Left cardiac atrium (tissue), 4 donors: ENCODE measurements at regions of chr7 and their contacts with region 1.

Region 1: DNA sequence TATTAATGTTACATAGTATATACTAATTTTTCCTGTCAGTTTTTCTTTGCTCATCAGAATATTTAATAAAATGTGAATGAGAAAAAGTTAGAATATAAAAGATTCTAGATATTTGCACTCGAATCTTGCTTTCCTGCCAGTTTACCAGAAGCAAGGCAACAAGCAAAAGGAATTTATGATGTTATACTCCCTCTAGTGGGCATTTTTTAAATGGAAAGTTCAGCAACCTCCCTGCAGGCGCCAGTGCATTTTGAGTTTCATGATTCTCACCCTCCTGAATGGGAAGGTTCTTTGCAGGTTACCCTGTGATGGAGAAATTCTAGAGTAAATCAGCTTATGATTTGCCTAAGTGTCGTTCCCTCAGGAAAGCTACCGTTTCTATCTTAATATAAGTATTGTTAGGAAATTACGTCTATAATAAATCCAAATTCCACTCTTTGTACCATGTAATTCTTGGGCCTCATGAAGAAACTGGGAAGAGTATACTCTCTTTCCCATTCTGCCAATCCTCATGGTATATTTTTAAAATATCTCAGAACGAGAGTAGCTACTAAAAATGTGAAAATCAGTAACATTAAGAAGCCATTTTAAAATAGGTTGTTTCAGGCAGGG is 350.0 kb downstream of the CRPPA start:
- DNase-seq: no peak
- ATAC-seq: peak; percentile 47 to 51

Region 2: DNA sequence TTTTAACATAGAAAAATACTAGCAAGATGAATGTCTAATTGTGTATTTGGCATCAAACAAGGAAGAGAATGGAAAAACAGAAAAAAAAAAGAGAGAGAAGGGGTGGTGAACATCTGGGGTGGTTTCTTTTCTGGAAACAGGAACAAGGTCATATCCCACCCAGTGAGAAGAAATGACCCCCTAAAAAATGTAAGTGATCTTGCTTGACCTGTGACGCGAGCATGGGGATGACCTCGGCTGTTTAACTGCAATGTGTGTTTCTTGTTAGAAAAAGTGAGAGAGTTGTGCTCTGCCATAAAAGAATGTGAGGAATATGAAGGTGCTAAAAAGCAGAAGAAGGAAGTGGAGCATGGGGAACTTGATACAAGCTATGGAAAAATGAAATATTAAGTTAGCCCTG is 768.0 kb before region 1 on chr7:
- intact Hi-C with region 1: loop called in 1 of 2 experiments (anchors 5 kb)
- DNase-seq: no peak
- ATAC-seq: no peak

Region 3: DNA sequence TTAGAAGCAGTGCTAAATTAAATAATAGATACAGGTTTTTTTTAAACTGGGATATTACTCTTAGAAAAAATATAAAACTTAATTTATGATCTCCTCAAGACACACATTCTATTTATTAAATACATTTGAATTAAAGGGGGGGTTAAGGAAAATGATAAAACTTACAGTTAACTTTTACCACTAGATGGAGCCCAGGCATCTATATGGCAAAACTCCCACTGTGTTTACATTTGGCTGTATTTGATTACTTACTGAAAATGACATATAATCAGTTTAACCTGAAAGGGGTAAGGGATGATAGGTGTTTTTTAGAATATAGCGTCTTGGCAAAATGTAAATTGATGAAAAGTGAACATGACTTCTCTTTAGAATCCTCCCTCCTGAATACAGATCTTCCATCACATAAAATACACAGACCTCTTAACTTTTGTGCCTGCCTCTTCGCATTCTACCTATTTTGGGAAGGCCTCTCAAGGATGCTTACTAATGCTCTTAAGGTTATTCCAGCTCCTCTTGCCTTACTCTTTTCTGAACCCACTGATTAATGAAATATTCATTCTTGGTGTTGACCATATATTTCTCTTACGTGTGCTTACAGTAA is 745.2 kb before region 1 on chr7:
- intact Hi-C with region 1: loop called (anchors 5 to 10 kb)
- DNase-seq: no peak
- ATAC-seq: no peak

Region 4: GRCh38 chr7:15561835-15562234 is 509.5 kb before region 1 on chr7 and contains the start of gene AGMO:
- intact Hi-C with region 1: loop called in 1 of 2 experiments (anchors 5 kb)
- DNase-seq: peak; percentile 48
- ATAC-seq: peak; percentile 80 to 85
- total RNA-seq, gene AGMO: 0.55 to 0.62 TPM

Region 5: GRCh38 chr7:15581352-15581951 is 489.9 kb before region 1 on chr7:
- intact Hi-C with region 1: no loop called
- DNase-seq: no peak
- ATAC-seq: no peak

Region 6: GRCh38 chr7:15889507-15889906 is 181.8 kb before region 1 on chr7:
- intact Hi-C with region 1: no loop called
- DNase-seq: peak; percentile 20
- ATAC-seq: peak; percentile 27 to 67

Region 7: DNA sequence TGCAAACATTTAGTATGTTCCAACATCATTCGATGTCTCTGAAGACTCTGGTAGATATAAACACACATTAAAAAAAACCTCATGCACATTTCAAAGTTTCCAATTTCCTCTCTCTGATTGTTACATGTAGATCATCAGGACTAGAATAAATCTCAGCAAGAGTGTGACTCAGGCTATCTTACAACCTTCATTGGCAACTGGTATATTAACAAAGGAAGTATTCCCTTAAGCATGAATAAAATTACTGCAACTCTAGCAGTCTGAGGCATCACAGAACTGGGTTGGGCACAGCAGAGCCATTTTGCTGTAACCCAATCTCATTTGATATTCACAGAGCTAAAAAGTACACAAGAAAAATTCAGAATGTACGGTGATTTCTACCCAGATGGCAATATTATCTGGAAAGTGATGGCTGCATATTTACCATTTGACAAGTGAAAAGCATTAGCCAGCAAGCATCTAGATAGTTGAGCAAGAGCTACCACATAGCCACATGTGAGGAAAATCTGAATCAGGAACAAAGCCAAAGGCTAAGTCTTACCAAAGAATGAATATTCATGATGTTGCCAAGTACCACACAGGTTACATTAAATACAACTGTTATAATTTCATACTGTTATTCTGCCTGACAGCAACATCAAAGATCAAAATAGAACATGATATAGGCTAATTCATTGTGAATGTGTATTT is 117.8 kb after region 1 on chr7:
- intact Hi-C with region 1: no loop called
- DNase-seq: no peak
- ATAC-seq: no peak

Region 8: GRCh38 chr7:16450366-16450765 is 379.0 kb after region 1 on chr7:
- intact Hi-C with region 1: no loop called
- DNase-seq: no peak
- ATAC-seq: no peak